ENCODE measurements at regions of chr17 and their contacts with region 1.

Region 1: GRCh38 chr17:50816771-50817751 is 18.3 kb upstream of the WFIKKN2 start:
- DNase-seq: peak; percentile 84
- H3K4me3 ChIP-seq: no peak overlapping the region; a peak in 1 of 4 replicates
- H3K27ac ChIP-seq: no peak overlapping the region
- H3K4me1 ChIP-seq: no peaks in the 10 kb centered on the region; a peak in 1 of 4 replicates
- H3K27me3 ChIP-seq: peaks cover 4% of the 10 kb centered on the region; the same call in 1 of the 2 replicates
- CTCF ChIP-seq: peak; percentile 82
- EP300 ChIP-seq: no peak
- RAD21 ChIP-seq: peak; percentile 44

Region 2: DNA sequence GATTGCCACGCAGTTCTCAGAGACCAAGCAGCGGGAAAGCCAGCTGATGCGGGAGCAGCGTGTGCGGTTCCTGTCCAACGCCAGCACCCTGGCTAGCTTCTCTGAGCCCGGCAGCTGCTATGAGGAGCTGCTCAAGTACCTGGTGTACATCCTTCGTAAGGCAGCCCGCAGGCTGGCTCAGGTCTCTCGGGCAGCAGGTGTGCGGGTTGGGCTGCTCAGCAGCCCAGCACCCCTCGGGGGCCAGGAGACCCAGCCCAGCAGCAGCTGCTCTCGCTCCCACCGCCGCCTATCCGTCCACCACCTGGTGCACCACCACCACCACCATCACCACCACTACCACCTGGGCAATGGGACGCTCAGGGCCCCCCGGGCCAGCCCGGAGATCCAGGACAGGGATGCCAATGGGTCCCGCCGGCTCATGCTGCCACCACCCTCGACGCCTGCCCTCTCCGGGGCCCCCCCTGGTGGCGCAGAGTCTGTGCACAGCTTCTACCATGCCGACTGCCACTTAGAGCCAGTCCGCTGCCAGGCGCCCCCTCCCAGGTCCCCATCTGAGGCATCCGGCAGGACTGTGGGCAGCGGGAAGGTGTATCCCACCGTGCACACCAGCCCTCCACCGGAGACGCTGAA is 241.4 kb before region 1 on chr17:
- CTCF ChIA-PET with region 1: no interaction called
- POLR2A ChIA-PET with region 1: no interaction called
- DNase-seq: no peak
- H3K4me3 ChIP-seq: no peak overlapping the region
- H3K27ac ChIP-seq: no peak overlapping the region
- H3K4me1 ChIP-seq: peaks cover 0 to 7% of the 10 kb centered on the region in 2 experiments; a peak in 1 of 4 replicates
- H3K27me3 ChIP-seq: peaks cover 8% of the 10 kb centered on the region
- CTCF ChIP-seq: 0 out of 2 replicates have a peak, but pooled peaks have one; percentile 18
- EP300 ChIP-seq: no peak
- RAD21 ChIP-seq: no peak

Region 3: GRCh38 chr17:50798424-50799288 is 18.4 kb before region 1 on chr17:
- CTCF ChIA-PET with region 1: interaction called, 44 read pairs
- POLR2A ChIA-PET with region 1: interaction called, 3 read pairs
- DNase-seq: no peak
- H3K4me3 ChIP-seq: no peak overlapping the region
- H3K27ac ChIP-seq: no peak overlapping the region
- H3K4me1 ChIP-seq: peaks cover 0 to 7% of the 10 kb centered on the region in 2 experiments; a peak in 1 of 4 replicates
- H3K27me3 ChIP-seq: no peaks in the 10 kb centered on the region
- CTCF ChIP-seq: no peak
- EP300 ChIP-seq: no peak
- RAD21 ChIP-seq: no peak

Region 4: DNA sequence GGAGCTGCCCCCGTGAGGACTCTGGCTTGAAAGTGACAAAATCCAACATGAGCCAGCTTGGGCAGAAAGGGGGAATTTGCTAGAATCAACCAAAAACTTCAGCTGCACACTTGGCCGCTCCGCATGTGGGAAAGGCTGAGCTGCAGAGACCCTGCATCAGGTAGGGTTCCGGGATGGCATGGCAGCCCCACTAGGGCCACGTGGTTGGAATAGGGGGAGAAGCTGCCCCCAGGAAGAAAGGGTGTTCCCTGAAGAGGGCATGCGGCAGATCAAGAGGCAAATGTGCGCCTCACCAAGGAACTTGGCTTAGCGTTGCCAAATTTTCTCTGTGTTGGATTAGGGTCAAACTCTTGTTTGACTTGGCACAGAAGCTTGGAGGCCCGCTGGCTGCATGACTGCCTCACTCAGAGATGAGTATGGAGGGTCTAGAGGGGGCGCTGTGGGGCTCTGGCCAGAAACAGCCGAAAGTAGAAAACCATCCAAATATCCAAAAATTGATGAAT is 10.9 kb before region 1 on chr17:
- CTCF ChIA-PET with region 1: interaction called, 44 read pairs
- POLR2A ChIA-PET with region 1: no interaction called
- DNase-seq: no peak
- H3K4me3 ChIP-seq: no peak overlapping the region
- H3K27ac ChIP-seq: no peak overlapping the region
- H3K4me1 ChIP-seq: no peaks in the 10 kb centered on the region
- H3K27me3 ChIP-seq: no peaks in the 10 kb centered on the region
- CTCF ChIP-seq: peak; percentile 48
- EP300 ChIP-seq: no peak
- RAD21 ChIP-seq: no peak

Region 5: DNA sequence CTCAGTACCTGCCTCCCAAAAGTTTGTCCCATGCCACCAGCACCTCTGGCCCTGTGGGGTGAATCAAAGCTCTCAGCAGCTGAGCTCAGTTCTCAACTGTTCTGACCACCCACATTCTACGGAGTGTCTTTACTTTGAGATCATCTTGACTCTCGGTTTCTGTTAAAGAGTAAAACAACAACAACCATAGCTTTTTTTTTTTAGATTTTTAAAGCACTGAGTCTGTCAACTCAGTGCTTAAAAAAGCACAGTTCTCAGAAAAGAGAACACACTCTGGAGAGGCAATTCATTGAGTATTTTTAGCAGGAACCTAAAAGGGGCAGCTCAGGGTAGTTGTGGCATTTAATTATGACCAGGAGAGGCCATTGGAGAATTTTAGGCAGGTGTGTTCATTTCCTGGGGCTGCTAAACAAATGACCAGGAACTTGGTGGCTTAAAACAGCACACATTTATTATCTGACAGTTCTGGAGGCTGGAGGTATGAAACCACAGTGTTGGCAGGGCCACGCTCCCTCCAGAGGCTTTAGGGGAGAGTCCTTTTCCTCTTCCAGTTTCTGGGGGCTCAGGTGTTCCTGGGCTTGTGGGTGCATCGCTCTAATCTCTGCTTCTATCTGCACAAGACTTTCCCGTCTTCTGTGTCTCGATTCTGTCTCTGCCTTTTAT is 11.6 kb after region 1 on chr17:
- CTCF ChIA-PET with region 1: interaction called, 47 read pairs
- POLR2A ChIA-PET with region 1: no interaction called
- DNase-seq: no peak
- H3K4me3 ChIP-seq: no peak overlapping the region
- H3K27ac ChIP-seq: no peak overlapping the region
- H3K4me1 ChIP-seq: peaks cover 0 to 4% of the 10 kb centered on the region in 2 experiments; a peak in 1 of 4 replicates
- H3K27me3 ChIP-seq: peaks cover 12% of the 10 kb centered on the region; the same call in 1 of the 2 replicates
- CTCF ChIP-seq: no peak
- EP300 ChIP-seq: no peak
- RAD21 ChIP-seq: no peak

Region 6: DNA sequence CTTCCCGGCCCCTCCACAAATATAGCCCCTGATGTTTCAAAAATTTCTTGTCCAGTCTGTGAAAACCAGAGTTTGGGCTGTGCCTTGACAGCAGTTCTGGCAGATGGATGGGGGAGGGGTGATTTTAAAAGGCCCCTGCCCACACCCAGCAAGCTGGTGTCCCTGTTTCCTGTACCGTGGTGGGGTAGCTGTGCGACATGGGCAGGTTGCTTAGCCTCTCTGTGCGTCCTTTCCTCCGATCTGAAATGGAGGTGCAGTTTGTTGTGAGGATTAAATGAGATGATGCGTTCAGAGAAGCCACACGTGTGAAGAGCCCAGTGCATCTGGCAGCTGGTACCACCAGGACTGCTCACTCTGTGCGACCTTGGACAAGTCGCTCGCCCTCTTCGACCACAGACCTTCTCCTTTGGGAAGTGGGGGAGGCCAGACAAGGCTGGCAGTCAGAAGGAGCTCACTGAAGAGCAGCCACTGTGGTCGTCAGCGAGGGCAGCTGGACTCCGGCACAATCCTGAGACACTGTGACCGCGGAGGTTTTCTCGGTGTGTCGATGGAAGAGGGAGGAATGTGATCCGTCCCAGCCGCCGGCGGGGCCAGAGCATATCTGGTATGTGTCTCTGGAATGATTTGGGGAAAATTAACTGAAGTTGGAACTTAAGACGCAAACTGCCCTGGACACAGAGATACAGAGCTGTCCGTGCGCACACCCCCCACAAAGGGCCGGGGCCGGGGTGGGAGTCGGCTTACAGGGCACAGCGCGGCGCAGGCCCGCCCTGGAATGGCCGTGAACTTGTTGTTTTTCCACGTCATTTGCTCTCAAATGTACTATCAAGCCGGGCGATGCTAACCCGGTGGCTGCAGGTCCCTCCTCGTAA is 17.6 kb after region 1 on chr17:
- CTCF ChIA-PET with region 1: interaction called, 47 read pairs
- POLR2A ChIA-PET with region 1: no interaction called
- DNase-seq: no peak
- H3K4me3 ChIP-seq: no peak overlapping the region
- H3K27ac ChIP-seq: no peak overlapping the region
- H3K4me1 ChIP-seq: peaks cover 0 to 12% of the 10 kb centered on the region in 2 experiments; a peak in 1 of 4 replicates
- H3K27me3 ChIP-seq: no peaks in the 10 kb centered on the region; the same call in 1 of the 2 replicates
- CTCF ChIP-seq: no peak
- EP300 ChIP-seq: no peak
- RAD21 ChIP-seq: no peak

Measured in SK-N-SH (cell line).